Activated CD4-positive, alpha-beta memory T cell treated with anti-CD3 and anti-CD28 coated beads for 36 hours (primary cell): ENCODE measurements at regions of chr16 and their contacts with region 1.

Region 1: GRCh38 chr16:89700100-89700648 is 1.3 kb downstream of the SPATA2L start:
- DNase-seq: peak; percentile 98
- H3K4me3 Mint-ChIP-seq: peak overlapping the region; percentile 72
- H3K27ac Mint-ChIP-seq: peak overlapping the region; percentile 23
- H3K4me1 Mint-ChIP-seq: peaks cover 22% of the 10 kb centered on the region
- H3K27me3 Mint-ChIP-seq: no peaks in the 10 kb centered on the region

Region 2: GRCh38 chr16:89219365-89219764 is 480.8 kb before region 1 on chr16:
- CTCF ChIA-PET with region 1: no interaction called
- POLR2A ChIA-PET with region 1: no interaction called
- intact Hi-C with region 1: no loop called
- DNase-seq: no peak
- H3K4me3 Mint-ChIP-seq: peak overlapping the region; percentile 57
- H3K27ac Mint-ChIP-seq: no peak overlapping the region
- H3K4me1 Mint-ChIP-seq: peaks cover 10% of the 10 kb centered on the region
- H3K27me3 Mint-ChIP-seq: no peaks in the 10 kb centered on the region

Region 3: DNA sequence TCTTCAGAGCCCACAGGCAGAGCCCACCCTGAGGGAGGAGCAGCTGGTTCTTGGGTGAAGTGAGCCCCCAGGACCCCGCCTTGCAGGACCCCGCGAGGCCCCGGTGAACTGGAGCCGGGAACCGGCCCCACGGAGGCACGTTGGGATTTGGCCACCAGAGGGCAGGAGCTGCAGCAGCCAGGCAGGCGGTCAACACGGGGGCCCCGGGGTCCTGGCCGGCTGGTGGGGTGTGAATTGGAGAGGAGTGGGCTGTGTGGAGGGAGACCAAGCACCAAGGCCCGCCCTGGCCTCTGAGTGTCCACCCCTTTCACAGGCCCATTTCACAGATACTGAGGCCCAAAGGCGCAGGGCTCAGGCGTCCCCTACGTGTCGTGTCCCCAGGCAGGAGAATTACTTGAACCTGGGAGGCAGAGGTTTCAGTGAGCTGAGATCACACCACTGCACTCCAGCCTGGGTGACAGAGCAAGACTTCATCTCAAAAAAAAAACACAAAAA is 84.5 kb before region 1 on chr16:
- CTCF ChIA-PET with region 1: no interaction called
- POLR2A ChIA-PET with region 1: no interaction called
- intact Hi-C with region 1: no loop called
- DNase-seq: peak; percentile 24
- H3K4me3 Mint-ChIP-seq: no peak overlapping the region
- H3K27ac Mint-ChIP-seq: no peak overlapping the region
- H3K4me1 Mint-ChIP-seq: peaks cover 7% of the 10 kb centered on the region
- H3K27me3 Mint-ChIP-seq: no peaks in the 10 kb centered on the region

Region 4: DNA sequence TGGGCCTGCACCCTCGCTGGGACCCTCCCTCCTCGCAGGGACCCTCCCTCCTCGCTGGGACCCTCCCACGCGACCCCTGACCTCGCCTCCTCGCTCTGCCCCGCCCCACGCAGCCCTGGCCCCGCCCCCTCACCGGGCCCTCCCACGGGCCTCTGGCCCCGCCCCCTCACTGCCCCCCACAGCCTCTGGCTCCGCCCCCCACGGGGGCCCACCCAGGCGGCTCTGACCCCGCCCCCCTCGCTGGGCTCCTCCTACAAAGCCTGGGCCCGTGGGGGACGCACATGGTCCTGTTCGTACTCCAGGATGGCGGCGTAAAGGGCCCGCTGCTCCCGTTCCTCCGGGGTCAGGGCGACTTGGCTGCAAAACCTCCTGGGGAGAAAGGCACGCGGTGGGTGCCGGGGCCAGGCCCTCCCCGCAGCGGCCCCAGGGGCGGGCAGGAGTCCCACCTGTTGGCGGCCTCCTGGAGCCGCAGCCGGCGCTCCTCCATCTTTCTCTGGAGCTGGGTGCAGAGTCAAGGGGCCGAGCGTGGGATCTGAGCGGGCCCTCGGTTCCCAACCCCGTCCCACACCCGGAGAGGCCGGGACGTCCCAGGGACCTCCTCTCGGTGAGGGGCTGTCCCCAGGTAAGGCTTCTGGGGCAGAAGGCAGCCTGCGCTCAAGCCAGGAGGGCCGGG is 11.6 kb after region 1 on chr16:
- CTCF ChIA-PET with region 1: interaction called, 19 read pairs
- POLR2A ChIA-PET with region 1: no interaction called
- intact Hi-C with region 1: no loop called
- DNase-seq: peak; percentile 86
- H3K4me3 Mint-ChIP-seq: peak overlapping the region; percentile 74
- H3K27ac Mint-ChIP-seq: no peak overlapping the region
- H3K4me1 Mint-ChIP-seq: peaks cover 2% of the 10 kb centered on the region
- H3K27me3 Mint-ChIP-seq: no peaks in the 10 kb centered on the region

Region 5: DNA sequence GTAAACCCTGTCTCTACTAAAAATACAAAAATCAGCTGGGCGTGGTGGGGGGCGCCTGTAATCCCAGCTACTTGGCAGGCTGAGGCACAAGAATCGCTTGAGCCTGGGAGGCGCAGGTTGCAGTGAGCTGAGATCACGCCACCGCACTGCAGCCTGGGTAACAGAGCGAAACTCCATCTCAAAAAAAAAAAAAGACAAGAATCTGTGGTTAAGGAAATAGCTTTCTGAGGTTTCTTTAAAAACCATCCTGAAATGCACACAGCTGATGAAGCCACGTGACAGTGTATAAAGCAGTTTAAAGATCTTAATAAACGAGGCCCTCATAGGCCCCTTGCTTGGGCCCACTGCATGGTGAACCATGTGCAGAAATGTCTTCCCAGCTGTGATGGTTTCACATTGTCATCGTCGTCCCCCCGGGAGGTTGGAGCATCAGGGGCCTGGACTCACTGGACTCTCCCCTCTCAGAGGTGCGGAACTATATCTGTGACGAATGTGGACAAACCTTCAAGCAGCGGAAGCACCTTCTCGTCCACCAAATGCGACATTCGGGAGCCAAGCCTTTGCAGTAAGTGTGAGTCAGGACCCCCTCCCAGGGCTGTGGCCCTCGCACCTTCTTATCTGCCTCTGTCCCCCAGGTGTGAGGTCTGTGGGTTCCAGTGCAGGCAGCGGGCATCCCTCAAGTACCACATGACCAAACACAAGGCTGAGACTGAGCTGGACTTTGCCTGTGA is 37.3 kb after region 1 on chr16:
- CTCF ChIA-PET with region 1: interaction called, 11 read pairs
- POLR2A ChIA-PET with region 1: no interaction called
- intact Hi-C with region 1: loop called (anchors 5 kb)
- DNase-seq: peak; percentile 65
- H3K4me3 Mint-ChIP-seq: peak overlapping the region; percentile 32
- H3K27ac Mint-ChIP-seq: peak overlapping the region; percentile 45
- H3K4me1 Mint-ChIP-seq: peaks cover 20% of the 10 kb centered on the region
- H3K27me3 Mint-ChIP-seq: no peaks in the 10 kb centered on the region

Region 6: DNA sequence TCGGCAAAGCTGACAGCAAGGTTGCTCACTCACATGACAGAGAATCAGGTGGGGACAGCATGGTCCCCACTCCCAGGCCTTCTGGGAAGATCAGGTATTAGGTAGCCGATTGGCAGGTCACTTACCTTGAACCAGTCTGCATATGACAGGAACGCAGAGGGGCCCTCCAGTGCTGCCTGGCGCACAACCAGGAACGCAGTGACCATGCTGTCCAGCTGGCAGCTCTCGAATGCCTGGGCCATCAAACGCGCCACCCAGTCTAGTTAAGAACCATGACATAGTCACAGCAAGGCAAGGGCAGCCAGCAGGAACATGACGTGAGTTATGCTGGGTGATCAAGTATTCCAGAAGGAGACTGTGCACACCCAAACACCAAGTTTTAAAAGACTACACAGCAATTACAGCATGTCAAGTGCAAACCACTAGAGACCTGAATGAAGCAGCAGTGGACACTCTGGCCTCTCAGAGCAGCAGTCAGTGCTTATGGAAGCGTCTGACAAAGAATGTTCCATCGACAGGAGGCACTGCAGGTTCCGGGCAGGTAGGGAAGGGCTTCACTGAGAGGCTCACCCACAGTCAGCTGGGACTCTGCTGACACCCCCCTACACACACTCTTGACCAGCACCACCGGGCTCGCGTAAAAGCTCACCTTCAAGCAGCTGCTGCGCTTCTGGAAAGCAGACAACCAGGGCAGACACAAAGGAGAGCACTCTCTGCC is 91.3 kb after region 1 on chr16:
- CTCF ChIA-PET with region 1: interaction called, 96 read pairs
- POLR2A ChIA-PET with region 1: no interaction called
- intact Hi-C with region 1: loop called (anchors 1 kb)
- DNase-seq: no peak
- H3K4me3 Mint-ChIP-seq: no peak overlapping the region
- H3K27ac Mint-ChIP-seq: no peak overlapping the region
- H3K4me1 Mint-ChIP-seq: peaks cover 6% of the 10 kb centered on the region
- H3K27me3 Mint-ChIP-seq: no peaks in the 10 kb centered on the region

Region 7: DNA sequence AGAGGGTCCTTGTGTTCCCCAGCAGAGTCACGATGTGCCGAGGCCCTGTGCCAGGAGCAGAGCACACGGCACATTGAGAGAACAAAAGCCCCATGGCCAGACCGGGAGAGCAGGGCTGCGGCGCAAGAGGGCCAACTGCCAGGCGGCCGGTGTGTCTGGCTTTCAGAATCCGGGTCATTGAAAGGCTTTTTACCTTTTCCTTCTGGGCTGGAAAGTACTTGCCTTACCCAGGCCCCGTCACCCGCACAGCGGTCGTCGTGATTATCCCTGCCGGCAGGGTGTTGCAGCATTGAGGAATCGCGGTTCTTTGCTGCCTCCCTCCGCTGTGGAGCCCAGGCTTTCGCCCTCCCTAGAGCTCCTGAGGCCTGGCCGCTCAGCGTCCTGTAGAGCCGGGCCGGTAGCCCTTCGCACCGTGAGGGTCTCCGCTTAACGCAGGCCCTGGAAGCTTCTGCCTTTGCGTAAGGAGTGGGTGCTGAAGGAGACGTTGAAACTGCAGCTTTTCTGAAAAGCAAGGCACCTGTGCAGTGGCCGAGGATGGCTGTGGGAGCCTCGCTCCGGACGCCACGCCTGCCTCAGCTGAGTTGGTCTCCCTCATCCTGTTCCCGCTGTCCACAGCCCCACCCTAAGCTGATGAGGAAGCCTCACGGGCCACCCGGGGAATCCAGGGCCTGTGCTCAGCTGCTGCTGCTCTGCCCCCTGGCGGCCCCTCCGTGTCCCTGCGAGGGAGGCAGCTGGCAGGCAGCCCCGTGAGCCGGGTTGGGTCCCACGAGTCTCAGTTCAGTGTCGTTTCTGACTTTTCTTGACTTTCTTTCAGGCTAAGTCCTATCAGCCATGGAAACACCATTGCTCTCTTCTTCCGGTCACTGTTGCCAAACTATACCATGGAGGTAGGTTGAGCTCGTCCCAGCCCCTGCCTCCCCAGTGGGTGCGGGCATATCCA is 209.9 kb after region 1 on chr16:
- CTCF ChIA-PET with region 1: interaction called, 16 read pairs
- POLR2A ChIA-PET with region 1: no interaction called
- intact Hi-C with region 1: loop called (anchors 5 kb)
- DNase-seq: peak; percentile 76
- H3K4me3 Mint-ChIP-seq: no peak overlapping the region
- H3K27ac Mint-ChIP-seq: no peak overlapping the region
- H3K4me1 Mint-ChIP-seq: no peaks in the 10 kb centered on the region
- H3K27me3 Mint-ChIP-seq: no peaks in the 10 kb centered on the region